ENCODE measurements at regions of chr1 and their contacts with region 1.

Region 1: GRCh38 chr1:209860293-209860881 is 32.6 kb downstream of the UTP25 start:
- DNase-seq: peak; percentile 51 to 78
- ATAC-seq: peak; percentile 87

Region 2: DNA sequence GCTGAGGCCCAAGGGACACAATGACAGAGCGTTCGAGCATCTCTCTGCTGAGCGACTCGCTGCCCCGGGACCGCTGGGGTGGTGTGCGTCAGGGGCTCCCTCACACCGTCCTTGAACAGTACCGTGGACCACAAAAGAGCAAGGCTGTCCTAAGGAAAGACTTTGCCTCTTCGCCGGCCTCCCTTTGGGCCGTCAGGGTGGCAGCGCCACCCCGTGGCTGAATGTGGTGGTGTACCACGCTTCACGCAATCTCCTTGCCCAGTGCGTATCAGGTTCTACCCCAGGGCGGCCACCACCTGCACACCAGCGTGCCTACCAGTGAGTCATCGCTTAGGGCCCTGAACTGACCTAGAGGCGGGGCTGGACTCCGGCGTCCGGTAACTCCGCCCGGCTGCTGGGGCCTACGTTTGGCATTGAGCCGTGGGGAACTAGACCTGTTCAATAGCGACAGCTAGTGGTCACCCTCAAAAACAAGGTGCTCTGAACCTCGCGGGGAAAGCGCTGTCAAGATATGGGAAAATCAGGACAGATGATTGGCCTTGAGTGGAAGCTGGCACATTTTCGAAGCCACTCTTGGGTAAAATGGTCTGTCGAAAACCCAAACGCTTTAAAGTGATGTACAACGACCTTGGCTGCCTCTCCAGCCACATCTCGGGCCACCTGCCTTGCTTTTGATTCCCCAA is 112.7 kb before region 1 on chr1:
- intact Hi-C with region 1: no loop called
- DNase-seq: peak; percentile 93 to 97
- ATAC-seq: peak; percentile 100

Region 3: GRCh38 chr1:209767706-209768105 is 92.7 kb before region 1 on chr1:
- intact Hi-C with region 1: no loop called
- DNase-seq: no peak
- ATAC-seq: no peak

Region 4: DNA sequence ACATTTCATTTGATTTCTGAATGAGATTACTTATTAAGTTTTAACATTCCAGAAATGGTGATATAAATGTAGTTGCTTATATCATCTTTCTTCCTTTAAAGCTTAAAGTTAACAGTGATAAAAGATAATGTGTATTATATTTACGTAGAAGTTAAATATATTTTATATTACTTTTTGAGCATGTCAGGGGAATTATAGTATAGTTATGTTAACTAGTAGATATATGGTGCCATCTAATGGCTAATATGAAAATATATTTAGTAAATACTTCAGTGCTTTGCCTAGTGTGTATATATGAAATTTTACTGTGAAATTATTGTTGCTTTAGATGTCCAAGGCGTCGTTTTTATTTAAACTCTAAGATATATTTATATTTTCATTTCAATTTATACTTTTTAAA is 129.1 kb after region 1 on chr1:
- intact Hi-C with region 1: loop called in 1 of 2 experiments (anchors 5 kb)
- DNase-seq: no peak
- ATAC-seq: no peak